HepG2 (cell line): ENCODE measurements at regions of chr17 and their contacts with region 1.

Region 1: GRCh38 chr17:44543213-44543904 is 13.9 kb upstream of the FZD2 start:
- DNase-seq: peak; percentile 64
- ATAC-seq: peak; percentile 67
- H3K4me3 ChIP-seq: no peak overlapping the region
- H3K27ac ChIP-seq: no peak overlapping the region
- H3K4me1 ChIP-seq: peaks cover 26% of the 10 kb centered on the region
- H3K27me3 ChIP-seq: peaks cover 1 to 7% of the 10 kb centered on the region in 2 experiments; a peak in 2 of 5 replicates
- CTCF ChIP-seq: no peak
- EP300 ChIP-seq: no peak
- POLR2A ChIP-seq: no peak
- RAD21 ChIP-seq: no peak

Region 2: GRCh38 chr17:44409314-44410028 is 133.9 kb before region 1 on chr17:
- CTCF ChIA-PET with region 1: no interaction called
- POLR2A ChIA-PET with region 1: no interaction called
- in situ Hi-C with region 1: no loop called
- intact Hi-C with region 1: no loop called
- DNase-seq: no peak
- ATAC-seq: peak; percentile 78
- H3K4me3 ChIP-seq: no peak overlapping the region
- H3K27ac ChIP-seq: no peak overlapping the region
- H3K4me1 ChIP-seq: no peaks in the 10 kb centered on the region
- H3K27me3 ChIP-seq: no peaks in the 10 kb centered on the region
- CTCF ChIP-seq: no peak
- EP300 ChIP-seq: no peak
- POLR2A ChIP-seq: no peak
- RAD21 ChIP-seq: no peak

Region 3: DNA sequence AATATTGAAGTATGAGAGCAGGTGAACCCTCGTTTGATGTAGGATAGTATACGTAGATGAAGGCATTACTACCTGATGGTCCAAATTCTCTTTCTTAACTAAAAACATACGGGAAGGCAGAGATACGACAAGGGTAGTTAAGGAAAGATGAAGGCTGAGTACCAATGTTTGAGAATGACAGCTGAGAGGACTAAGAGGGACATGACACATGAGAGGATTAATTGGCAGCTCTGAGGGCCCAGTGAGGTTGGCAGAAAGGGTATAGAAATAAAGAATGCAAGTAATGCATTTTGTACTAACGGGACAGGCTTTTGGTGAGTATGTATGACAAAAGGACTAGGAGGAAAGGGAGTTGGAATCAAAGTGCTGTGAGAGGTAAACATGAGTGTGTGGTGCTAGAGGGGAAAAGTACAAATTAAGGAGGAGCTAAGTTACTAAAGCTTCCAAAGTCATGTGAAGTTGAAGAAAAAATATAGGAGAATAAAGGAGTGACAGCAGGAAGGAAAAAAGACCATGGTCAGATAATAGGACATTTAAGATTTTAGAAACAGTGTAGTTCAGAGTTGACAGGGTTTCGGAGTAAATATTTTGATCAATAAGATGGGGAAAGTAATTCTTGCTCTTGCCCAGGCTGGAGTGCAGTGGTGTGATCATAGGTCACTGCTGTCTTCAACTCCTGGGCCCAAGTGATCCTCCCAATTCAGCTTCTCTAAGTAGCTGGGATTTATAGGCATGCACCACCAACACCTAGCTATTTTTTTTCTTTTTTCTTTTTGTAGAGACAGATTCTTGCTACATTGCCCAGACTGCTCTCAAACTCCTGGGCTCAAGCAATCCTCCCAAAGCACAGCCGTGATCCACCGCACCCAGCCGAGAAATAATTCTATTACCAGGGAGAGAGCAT is 110.9 kb before region 1 on chr17:
- CTCF ChIA-PET with region 1: no interaction called
- POLR2A ChIA-PET with region 1: no interaction called
- in situ Hi-C with region 1: no loop called
- intact Hi-C with region 1: no loop called
- DNase-seq: no peak
- ATAC-seq: no peak
- H3K4me3 ChIP-seq: no peak overlapping the region
- H3K27ac ChIP-seq: no peak overlapping the region
- H3K4me1 ChIP-seq: no peaks in the 10 kb centered on the region
- H3K27me3 ChIP-seq: no peaks in the 10 kb centered on the region
- CTCF ChIP-seq: no peak
- EP300 ChIP-seq: no peak
- POLR2A ChIP-seq: no peak
- RAD21 ChIP-seq: no peak

Region 4: GRCh38 chr17:44636562-44636961 is 93.2 kb after region 1 on chr17:
- CTCF ChIA-PET with region 1: no interaction called
- POLR2A ChIA-PET with region 1: no interaction called
- in situ Hi-C with region 1: loop called (anchors 5 kb)
- intact Hi-C with region 1: no loop called
- DNase-seq: peak; percentile 16
- ATAC-seq: no peak
- H3K4me3 ChIP-seq: no peak overlapping the region
- H3K27ac ChIP-seq: no peak overlapping the region
- H3K4me1 ChIP-seq: no peaks in the 10 kb centered on the region
- H3K27me3 ChIP-seq: no peaks in the 10 kb centered on the region
- CTCF ChIP-seq: peak; percentile 67
- EP300 ChIP-seq: no peak
- POLR2A ChIP-seq: no peak
- RAD21 ChIP-seq: peak; percentile 51; the same call in 1 of the 2 replicates